ENCODE measurements at regions of chr6 and their contacts with region 1.

Region 1: DNA sequence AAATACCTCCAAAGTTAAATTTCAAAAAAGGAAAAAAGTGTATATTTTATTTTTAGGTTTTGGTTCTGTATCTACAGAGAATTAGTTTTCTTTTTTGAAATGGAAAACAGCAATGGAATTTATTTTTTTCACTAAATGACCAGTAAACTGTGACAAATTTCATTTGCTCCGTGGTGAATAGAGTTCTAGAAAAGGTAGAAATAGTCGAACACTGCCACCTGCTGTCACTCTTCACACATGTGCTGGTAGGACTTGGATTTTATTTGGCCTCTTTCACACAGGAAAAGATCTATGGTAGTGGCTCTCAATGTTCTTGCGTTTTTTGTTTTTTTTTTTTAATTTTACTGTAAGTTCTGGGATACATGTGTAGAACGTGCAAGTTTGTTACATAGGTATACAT is 312.5 kb downstream of the EYA4 start:
- DNase-seq: peak; percentile 79
- ATAC-seq: peak; percentile 33; the same call in 1 of the 2 replicates
- H3K4me3 ChIP-seq: no peak overlapping the region
- H3K27ac ChIP-seq: no peak overlapping the region
- H3K4me1 ChIP-seq: peaks cover 12% of the 10 kb centered on the region
- H3K27me3 ChIP-seq: no peaks in the 10 kb centered on the region
- CTCF ChIP-seq: peak; percentile 83
- POLR2A ChIP-seq: no peak
- RAD21 ChIP-seq: peak; percentile 84

Region 2: DNA sequence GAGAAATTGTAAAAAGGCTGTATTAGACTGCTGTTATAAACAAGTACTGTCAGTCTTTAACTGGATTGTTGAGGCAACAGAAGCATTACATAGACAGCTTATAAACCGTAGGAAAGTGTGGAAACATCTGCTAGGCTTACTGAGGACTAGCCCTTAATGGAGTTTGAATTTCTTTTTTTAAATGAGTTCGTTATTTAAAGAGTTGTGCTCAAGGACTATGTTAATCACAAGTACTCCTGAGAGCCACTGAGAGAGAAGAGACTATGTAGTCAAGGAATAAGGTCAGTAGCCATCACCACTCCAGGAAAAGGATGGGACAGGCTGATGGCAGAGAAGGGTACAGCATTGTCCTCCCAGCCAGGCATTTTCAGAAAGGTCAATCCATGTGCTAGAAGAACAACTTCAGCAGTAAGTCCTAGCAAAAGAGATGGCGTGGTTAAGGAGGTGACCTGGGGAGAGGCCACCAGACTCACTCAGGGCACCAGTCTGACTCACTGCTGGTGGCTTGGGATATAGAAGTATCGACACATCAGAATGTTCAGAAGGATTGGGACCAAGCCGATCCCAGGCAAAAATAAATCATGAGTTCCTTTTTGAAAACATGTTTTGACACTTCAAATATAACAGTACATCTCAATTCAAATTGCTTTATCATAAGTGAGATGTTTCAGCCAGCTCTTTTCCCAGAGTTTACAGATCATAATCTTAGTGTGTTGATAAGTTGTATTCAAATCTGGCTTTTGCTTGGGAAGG is 732.8 kb before region 1 on chr6:
- CTCF ChIA-PET with region 1: interaction called, 7 read pairs
- POLR2A ChIA-PET with region 1: no interaction called
- dilution Hi-C with region 1: no loop called
- in situ Hi-C with region 1: no loop called
- intact Hi-C with region 1: loop called (anchors 2 kb)
- DNase-seq: peak; percentile 52
- ATAC-seq: peak; percentile 41
- H3K4me3 ChIP-seq: no peak overlapping the region
- H3K27ac ChIP-seq: peak overlapping the region; percentile 42; the same call in 1 of the 2 replicates
- H3K4me1 ChIP-seq: peaks cover 4% of the 10 kb centered on the region
- H3K27me3 ChIP-seq: no peaks in the 10 kb centered on the region
- CTCF ChIP-seq: no peak
- POLR2A ChIP-seq: peak; percentile 45
- RAD21 ChIP-seq: no peak

Region 3: GRCh38 chr6:132962936-132963868 is 590.5 kb before region 1 on chr6:
- CTCF ChIA-PET with region 1: interaction called, 6 read pairs
- POLR2A ChIA-PET with region 1: no interaction called
- dilution Hi-C with region 1: no loop called
- in situ Hi-C with region 1: no loop called
- intact Hi-C with region 1: loop called (anchors 1 kb)
- DNase-seq: peak; percentile 77
- ATAC-seq: peak; percentile 60
- H3K4me3 ChIP-seq: no peak overlapping the region
- H3K27ac ChIP-seq: no peak overlapping the region
- H3K4me1 ChIP-seq: peaks cover 9% of the 10 kb centered on the region
- H3K27me3 ChIP-seq: no peaks in the 10 kb centered on the region
- CTCF ChIP-seq: peak; percentile 71
- POLR2A ChIP-seq: no peak
- RAD21 ChIP-seq: peak; percentile 82

Region 4: GRCh38 chr6:133193396-133193795 is 360.3 kb before region 1 on chr6:
- CTCF ChIA-PET with region 1: interaction called, 8 read pairs
- POLR2A ChIA-PET with region 1: no interaction called
- dilution Hi-C with region 1: no loop called
- in situ Hi-C with region 1: loop called (anchors 10 kb)
- intact Hi-C with region 1: loop called (anchors 2 kb)
- DNase-seq: no peak
- ATAC-seq: no peak; the same call in 1 of the 2 replicates
- H3K4me3 ChIP-seq: no peak overlapping the region
- H3K27ac ChIP-seq: no peak overlapping the region
- H3K4me1 ChIP-seq: no peaks in the 10 kb centered on the region; the same call in 1 of the 2 replicates
- H3K27me3 ChIP-seq: no peaks in the 10 kb centered on the region; the same call in 1 of the 2 replicates
- CTCF ChIP-seq: no peak
- POLR2A ChIP-seq: no peak
- RAD21 ChIP-seq: no peak

Region 5: DNA sequence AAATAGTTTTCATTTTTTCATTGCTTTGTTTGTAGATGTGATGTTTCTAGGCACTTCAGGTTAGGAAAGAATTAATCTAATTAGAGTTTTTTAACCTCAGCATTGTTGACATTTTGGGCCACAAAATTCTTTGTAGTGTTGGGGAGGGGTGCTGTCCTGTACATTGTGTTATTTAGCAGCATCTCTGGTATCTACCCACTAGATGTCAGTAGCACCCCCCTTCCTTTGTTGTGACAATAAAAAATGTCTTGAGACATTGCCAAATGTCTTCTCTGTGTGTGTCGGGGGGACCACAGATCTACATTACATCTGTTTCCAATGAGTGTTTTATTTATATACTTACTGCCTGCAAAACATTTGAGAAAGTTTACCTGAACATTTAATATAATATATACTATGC is 266.9 kb before region 1 on chr6:
- CTCF ChIA-PET with region 1: no interaction called
- POLR2A ChIA-PET with region 1: no interaction called
- dilution Hi-C with region 1: no loop called
- in situ Hi-C with region 1: no loop called
- intact Hi-C with region 1: loop called (anchors 5 kb)
- DNase-seq: peak; percentile 27
- ATAC-seq: peak; percentile 44; the same call in 1 of the 2 replicates
- H3K4me3 ChIP-seq: no peak overlapping the region
- H3K27ac ChIP-seq: no peak overlapping the region
- H3K4me1 ChIP-seq: no peaks in the 10 kb centered on the region
- H3K27me3 ChIP-seq: no peaks in the 10 kb centered on the region
- CTCF ChIP-seq: peak; percentile 48
- POLR2A ChIP-seq: no peak
- RAD21 ChIP-seq: peak; percentile 58

Region 6: DNA sequence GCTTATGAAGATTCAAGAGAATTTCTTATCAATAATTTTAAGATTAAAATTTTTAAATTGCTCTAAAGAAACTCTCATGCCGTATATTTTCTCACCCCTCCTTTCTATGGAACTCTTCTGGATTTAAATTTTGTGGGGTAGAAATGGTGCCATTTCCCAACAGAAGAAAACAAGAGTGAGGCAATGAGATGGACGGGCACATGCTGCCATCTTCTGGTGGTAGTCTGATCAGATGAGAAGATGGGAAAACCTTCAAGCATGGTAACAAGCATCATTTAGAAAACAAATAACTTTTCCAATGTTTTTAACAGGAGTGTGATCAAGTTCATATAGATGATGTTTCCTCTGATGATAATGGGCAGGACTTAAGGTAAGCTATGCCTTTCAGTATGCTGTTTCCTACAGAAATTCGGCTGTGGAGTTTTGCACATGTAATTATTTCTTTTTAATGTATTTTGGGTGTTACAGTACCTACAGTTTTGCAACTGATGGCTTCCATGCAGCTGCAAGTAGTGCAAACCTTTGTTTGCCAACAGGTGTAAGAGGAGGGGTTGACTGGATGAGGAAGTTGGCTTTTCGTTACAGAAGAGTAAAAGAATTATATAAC is 41.1 kb before region 1 on chr6:
- CTCF ChIA-PET with region 1: no interaction called
- POLR2A ChIA-PET with region 1: no interaction called
- dilution Hi-C with region 1: no loop called
- in situ Hi-C with region 1: no loop called
- intact Hi-C with region 1: loop called (anchors 2 kb)
- DNase-seq: peak; percentile 67
- ATAC-seq: peak; percentile 72
- H3K4me3 ChIP-seq: no peak overlapping the region
- H3K27ac ChIP-seq: no peak overlapping the region
- H3K4me1 ChIP-seq: no peaks in the 10 kb centered on the region
- H3K27me3 ChIP-seq: no peaks in the 10 kb centered on the region
- CTCF ChIP-seq: peak; percentile 81
- POLR2A ChIP-seq: peak; percentile 46; the same call in 1 of the 2 replicates
- RAD21 ChIP-seq: peak; percentile 92